HEK293 (cell line): ENCODE measurements at regions of chr15 and their contacts with region 1.

Region 1: GRCh38 chr15:43977072-43977884 is 150.5 kb downstream of the WDR76 start:
- H3K4me3 ChIP-seq: no peak overlapping the region
- H3K27ac ChIP-seq: no peak overlapping the region
- H3K4me1 ChIP-seq: peaks cover 11% of the 10 kb centered on the region
- CTCF ChIP-seq: no peak

Region 2: GRCh38 chr15:44023176-44023575 is 45.9 kb after region 1 on chr15:
- CTCF ChIA-PET with region 1: no interaction called
- POLR2A ChIA-PET with region 1: no interaction called
- H3K4me3 ChIP-seq: no peak overlapping the region
- H3K27ac ChIP-seq: no peak overlapping the region
- H3K4me1 ChIP-seq: no peaks in the 10 kb centered on the region
- CTCF ChIP-seq: no peak

Region 3: GRCh38 chr15:44414001-44414400 is 436.7 kb after region 1 on chr15:
- CTCF ChIA-PET with region 1: interaction called, 10 read pairs
- POLR2A ChIA-PET with region 1: no interaction called
- H3K4me3 ChIP-seq: no peak overlapping the region
- H3K27ac ChIP-seq: no peak overlapping the region
- H3K4me1 ChIP-seq: no peaks in the 10 kb centered on the region
- CTCF ChIP-seq: no peak